A549 (cell line): ENCODE measurements at regions of chr3 and their contacts with region 1.

Region 1: DNA sequence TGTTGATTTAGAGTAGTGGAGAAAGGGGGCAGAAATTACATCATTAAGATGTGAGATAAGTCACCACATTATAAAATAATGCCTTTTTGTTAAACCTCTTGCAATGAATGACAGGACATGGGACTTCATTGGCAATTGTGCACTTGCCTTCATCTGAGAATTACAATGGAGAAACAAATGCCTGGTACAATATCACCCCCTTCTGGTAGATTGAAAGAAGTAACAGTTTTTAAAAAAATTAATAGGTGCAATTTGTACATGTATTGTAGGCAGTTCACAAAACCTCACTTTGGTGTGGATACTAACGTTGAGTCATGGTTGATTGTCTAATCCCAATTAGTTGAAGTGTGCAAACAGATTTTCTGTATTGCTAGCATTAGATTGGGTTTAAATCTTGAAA is 4.6 kb upstream of the P2RY14 start:
- DNase-seq: peak; percentile 60 to 63
- ATAC-seq: peak; percentile 63 to 85; a peak in 3 of 6 replicates
- H3K4me3 ChIP-seq: no peak overlapping the region
- H3K27ac ChIP-seq: no peak overlapping the region
- H3K4me1 ChIP-seq: peaks cover 11% of the 10 kb centered on the region; the same call in 2 of the 3 replicates
- CTCF ChIP-seq: peak; percentile 85
- EP300 ChIP-seq: no peak
- POLR2A ChIP-seq: no peak
- RAD21 ChIP-seq: peak; percentile 88 to 89

Region 2: GRCh38 chr3:150790641-150791310 is 492.1 kb before region 1 on chr3:
- CTCF ChIA-PET with region 1: no interaction called
- POLR2A ChIA-PET with region 1: no interaction called
- DNase-seq: no peak
- ATAC-seq: no peak
- H3K4me3 ChIP-seq: no peak overlapping the region
- H3K27ac ChIP-seq: no peak overlapping the region
- H3K4me1 ChIP-seq: no peaks in the 10 kb centered on the region
- CTCF ChIP-seq: no peak
- EP300 ChIP-seq: no peak
- POLR2A ChIP-seq: no peak
- RAD21 ChIP-seq: no peak

Region 3: GRCh38 chr3:150936693-150937092 is 346.2 kb before region 1 on chr3:
- CTCF ChIA-PET with region 1: no interaction called
- POLR2A ChIA-PET with region 1: no interaction called
- DNase-seq: no peak
- ATAC-seq: no peak
- H3K4me3 ChIP-seq: no peak overlapping the region
- H3K27ac ChIP-seq: no peak overlapping the region
- H3K4me1 ChIP-seq: no peaks in the 10 kb centered on the region
- CTCF ChIP-seq: no peak
- EP300 ChIP-seq: no peak
- POLR2A ChIP-seq: no peak
- RAD21 ChIP-seq: no peak

Region 4: GRCh38 chr3:151156618-151157216 is 126.2 kb before region 1 on chr3:
- CTCF ChIA-PET with region 1: interaction called, 11 read pairs
- POLR2A ChIA-PET with region 1: no interaction called
- DNase-seq: peak; percentile 62 to 74
- ATAC-seq: peak; percentile 86 to 93
- H3K4me3 ChIP-seq: no peak overlapping the region
- H3K27ac ChIP-seq: no peak overlapping the region
- H3K4me1 ChIP-seq: no peaks in the 10 kb centered on the region
- CTCF ChIP-seq: peak; percentile 67
- EP300 ChIP-seq: no peak
- POLR2A ChIP-seq: no peak
- RAD21 ChIP-seq: peak; percentile 30 to 38; a peak in 3 of 5 replicates

Region 5: GRCh38 chr3:151268267-151269235 is 14.4 kb before region 1 on chr3:
- CTCF ChIA-PET with region 1: interaction called, 10 read pairs
- POLR2A ChIA-PET with region 1: no interaction called
- DNase-seq: no peak
- ATAC-seq: no peak
- H3K4me3 ChIP-seq: no peak overlapping the region
- H3K27ac ChIP-seq: no peak overlapping the region
- H3K4me1 ChIP-seq: no peaks in the 10 kb centered on the region
- CTCF ChIP-seq: no peak
- EP300 ChIP-seq: no peak
- POLR2A ChIP-seq: no peak
- RAD21 ChIP-seq: no peak

Region 6: DNA sequence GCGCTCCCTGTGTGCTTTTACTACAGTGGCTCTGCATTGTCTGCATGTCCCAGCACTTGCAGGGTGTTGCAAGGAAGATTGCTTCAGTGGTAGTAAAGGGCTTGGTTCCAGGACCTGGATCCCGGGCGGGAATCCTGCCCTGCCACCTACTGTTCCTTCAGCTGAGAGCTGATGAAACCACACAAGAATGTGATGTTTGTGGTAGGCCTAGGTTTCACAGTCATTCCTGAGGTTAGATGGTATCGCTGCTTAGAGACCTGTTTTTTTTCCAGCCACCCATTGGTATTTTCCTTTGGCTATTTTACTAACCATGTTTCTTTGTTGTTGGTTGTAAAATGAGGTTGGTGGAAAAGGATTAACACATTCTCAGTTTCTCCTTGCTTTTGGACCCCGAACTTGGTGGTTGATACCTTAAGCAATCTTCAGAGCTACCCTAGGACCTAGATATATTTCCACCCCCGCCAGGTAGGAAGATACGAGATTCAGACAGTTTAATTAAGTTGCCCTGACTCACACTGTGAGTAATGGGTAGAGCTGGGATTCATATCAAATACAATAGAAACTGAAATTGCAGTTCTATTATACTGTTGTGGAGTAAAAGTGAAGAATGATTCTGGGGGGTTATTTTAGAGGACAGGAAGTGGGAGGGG is 22.3 kb after region 1 on chr3:
- CTCF ChIA-PET with region 1: interaction called, 12 read pairs
- POLR2A ChIA-PET with region 1: no interaction called
- DNase-seq: peak; percentile 61 to 82
- ATAC-seq: peak; percentile 97
- H3K4me3 ChIP-seq: no peak overlapping the region
- H3K27ac ChIP-seq: peak overlapping the region; percentile 72 to 84
- H3K4me1 ChIP-seq: peaks cover 26% of the 10 kb centered on the region
- CTCF ChIP-seq: peak; percentile 28; the same call in 1 of the 3 replicates
- EP300 ChIP-seq: peak in 1 of 2 experiments; percentile 40; a peak in 1 of 5 replicates
- POLR2A ChIP-seq: no peak
- RAD21 ChIP-seq: peak; percentile 37 to 46

Region 7: DNA sequence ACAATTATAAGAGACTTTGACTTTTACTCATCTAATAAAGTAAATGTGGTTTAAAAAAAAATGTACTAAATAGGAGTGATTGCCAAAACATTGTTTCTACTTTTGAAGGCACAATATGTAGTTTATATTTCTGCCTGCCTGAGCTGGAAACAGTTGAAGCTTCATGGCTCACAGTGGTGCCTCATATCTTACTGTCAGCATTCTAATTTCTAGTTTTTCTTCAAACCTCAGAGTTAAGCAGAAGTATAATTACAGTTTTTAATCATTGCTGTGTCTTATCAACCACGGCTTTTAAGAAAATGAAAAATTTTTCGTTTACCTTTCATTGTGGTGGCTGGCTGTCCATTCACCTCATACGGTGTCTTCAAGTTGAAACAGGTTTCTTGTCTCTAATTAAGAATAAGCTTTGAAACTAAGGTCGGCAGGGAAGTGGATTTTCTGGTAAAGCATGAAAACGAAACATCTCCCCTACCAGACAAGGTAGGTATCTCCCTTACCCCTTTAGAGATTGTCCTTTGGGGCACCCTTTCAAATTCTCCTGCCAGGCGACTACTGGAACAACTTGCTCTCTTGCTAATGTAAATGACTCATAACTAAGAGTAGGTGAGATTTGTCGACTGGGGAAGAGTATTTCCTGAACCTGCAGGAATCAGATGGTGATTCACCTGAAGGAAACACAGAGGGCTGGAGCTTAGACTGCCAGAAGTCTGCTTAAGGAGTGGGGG is 33.5 kb after region 1 on chr3 and contains the start of gene GPR87:
- CTCF ChIA-PET with region 1: no interaction called
- POLR2A ChIA-PET with region 1: no interaction called
- DNase-seq: peak; percentile 35 to 39
- ATAC-seq: peak; percentile 59 to 64; a peak in 2 of 6 replicates
- H3K4me3 ChIP-seq: no peak within 1 kb of the TSS
- H3K27ac ChIP-seq: peak within 1 kb of the TSS; percentile 15 to 60; a peak in 1 of 6 replicates
- H3K4me1 ChIP-seq: peaks cover 20% of the 10 kb centered on the region; the same call in 2 of the 3 replicates
- CTCF ChIP-seq: no peak
- EP300 ChIP-seq: no peak
- POLR2A ChIP-seq: no peak
- RAD21 ChIP-seq: no peak
- polyA plus RNA-seq, gene GPR87: 0.52 and 0.56 TPM in 2 replicates

Region 8: GRCh38 chr3:151425627-151426335 is 142.9 kb after region 1 on chr3:
- CTCF ChIA-PET with region 1: no interaction called
- POLR2A ChIA-PET with region 1: no interaction called
- DNase-seq: peak in 1 of 2 experiments; percentile 12
- ATAC-seq: peak; percentile 11 to 35; a peak in 3 of 6 replicates
- H3K4me3 ChIP-seq: no peak overlapping the region
- H3K27ac ChIP-seq: peak overlapping the region in 1 of 2 experiments; percentile 26; a peak in 1 of 6 replicates
- H3K4me1 ChIP-seq: peaks cover 16% of the 10 kb centered on the region
- CTCF ChIP-seq: peak; percentile 50
- EP300 ChIP-seq: no peak
- POLR2A ChIP-seq: no peak
- RAD21 ChIP-seq: peak in 1 of 2 experiments; percentile 28; a peak in 2 of 5 replicates